Activated T-helper 1 cell treated with anti-CD3 and anti-CD28 coated beads, Interleukin-12 subunit alpha, Interleukin-12 subunit beta, Interleukin-2, Interleukin-4 antibody, amounts not matched to agents 30 ng/mL and 10 ng/mL and 1 ng/mL, durations not matched to agents 14 hours and 24 hours and 36 hours (primary cell): ENCODE measurements at regions of chr3 and their contacts with region 1.

Region 1: DNA sequence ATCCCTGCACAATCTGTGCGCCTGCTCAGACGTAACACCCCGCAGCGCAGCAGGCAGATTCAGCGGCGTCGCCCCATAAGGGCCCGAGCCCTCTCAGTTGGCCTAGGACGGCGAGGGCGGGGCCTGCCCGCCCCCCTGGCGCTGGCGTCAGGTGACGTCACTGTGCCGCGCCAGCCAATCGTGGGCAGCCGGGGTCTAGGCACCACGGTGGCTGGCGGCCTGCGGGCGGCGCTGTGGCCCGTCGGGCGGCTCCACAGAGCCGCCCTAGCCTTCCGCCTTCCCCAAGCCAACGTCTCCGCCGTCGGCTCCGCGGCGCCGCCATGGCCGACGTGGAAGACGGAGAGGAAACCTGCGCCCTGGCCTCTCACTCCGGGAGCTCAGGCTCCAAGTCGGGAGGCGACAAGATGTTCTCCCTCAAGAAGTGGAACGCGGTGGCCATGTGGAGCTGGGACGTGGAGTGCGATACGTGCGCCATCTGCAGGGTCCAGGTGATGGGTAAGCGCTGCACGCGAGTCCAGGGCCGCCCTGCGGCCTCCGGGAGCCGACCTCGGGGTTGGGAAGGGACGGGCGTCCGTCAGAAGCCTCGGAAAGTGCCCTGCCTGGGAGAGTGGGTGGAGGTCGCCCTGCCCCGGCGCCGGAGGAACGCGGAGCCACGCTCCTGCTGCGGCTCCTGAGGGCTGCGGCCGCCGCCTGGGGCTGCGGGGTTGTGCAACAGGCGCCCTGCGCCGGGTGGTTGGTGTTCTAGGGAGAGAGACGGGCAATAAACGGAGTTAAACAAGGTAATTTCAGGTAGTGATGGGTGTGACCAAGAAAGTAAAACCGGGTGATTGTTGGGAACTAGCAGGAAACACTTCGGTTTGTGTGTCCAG is at the start of gene RNF7:
- DNase-seq: peak; percentile 97
- H3K4me3 Mint-ChIP-seq: peak within 1 kb of the TSS; percentile 100
- H3K27ac Mint-ChIP-seq: peak within 1 kb of the TSS; percentile 99
- H3K4me1 Mint-ChIP-seq: peaks cover 30% of the 10 kb centered on the region
- H3K27me3 Mint-ChIP-seq: peaks cover 5% of the 10 kb centered on the region
- total RNA-seq, gene RNF7: 70.5 and 70.9 TPM in 2 replicates

Region 2: DNA sequence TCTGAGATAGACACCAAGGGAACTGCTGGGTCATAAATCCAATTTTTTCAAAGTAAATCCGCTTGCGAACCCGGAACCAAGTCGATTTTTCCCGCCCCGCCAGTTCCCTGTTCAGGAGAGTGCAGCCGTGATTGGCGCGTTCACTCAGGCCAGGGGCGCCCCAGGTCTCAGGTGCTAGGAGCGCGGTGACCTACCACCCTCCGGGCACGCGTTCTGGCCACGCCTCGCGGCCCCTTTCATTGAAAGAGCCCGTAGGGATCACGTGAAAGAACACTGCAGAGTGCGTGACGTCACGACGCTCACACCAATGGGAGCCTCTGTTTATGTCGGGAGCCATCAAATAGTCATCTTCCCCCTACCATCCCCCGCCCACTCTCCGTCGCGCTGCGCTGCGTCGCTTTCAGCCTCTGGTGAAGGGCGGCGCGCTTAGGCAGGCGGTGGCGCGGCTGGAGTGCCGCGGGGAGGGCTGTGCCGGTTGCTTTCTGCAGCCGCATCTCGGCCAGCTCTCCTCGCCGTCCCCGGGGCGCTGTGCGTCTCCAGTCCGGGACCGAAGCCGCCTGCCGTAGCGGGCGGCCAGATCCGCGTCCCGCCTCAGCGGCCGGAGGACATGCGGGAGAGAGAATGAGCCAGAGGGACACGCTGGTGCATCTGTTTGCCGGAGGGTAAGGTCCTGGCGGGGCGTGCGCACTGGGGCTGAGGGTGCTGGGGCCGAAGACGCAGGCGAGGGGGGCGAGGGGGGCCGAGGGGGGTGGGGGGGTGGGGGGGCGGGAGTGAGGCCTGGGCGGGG is 796.6 kb before region 1 on chr3 and contains the start of gene SLC25A36:
- intact Hi-C with region 1: loop called (anchors 2 kb)
- DNase-seq: peak; percentile 95
- H3K4me3 Mint-ChIP-seq: peak within 1 kb of the TSS; percentile 92
- H3K27ac Mint-ChIP-seq: peak within 1 kb of the TSS; percentile 95
- H3K4me1 Mint-ChIP-seq: peaks cover 36% of the 10 kb centered on the region
- H3K27me3 Mint-ChIP-seq: peaks cover 12% of the 10 kb centered on the region
- total RNA-seq, gene SLC25A36: 49.5 and 52.3 TPM in 2 replicates

Region 3: DNA sequence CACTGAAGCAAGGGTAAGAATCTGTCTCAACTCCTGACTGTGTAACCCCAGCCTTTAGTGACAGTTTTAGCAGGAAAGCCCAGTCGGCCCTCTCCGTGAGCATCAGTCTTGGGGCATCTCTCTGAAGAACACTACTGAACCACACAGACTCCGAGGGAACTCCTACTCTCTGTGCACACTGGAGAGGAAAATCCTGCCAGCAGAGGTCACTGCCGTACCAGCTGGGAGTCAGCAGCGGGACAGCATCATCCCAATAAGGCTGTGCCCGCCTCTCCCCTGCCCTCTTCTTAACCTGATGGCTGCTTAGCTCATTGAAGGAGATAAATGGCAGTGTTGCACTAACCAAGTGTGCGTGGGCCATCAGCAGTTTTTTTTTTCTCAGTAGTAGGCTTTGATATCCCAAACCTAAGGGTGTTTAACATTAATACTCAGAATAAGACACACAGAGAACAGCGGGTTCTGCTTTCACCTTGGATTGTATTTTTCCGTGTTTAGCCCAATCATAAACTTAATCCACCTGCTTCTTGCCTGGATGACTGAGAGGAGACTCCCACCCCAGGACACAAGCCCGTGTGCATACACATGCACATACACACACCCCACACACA is 278.1 kb before region 1 on chr3:
- intact Hi-C with region 1: loop called (anchors 1 kb)
- DNase-seq: peak; percentile 78
- H3K4me3 Mint-ChIP-seq: no peak overlapping the region
- H3K27ac Mint-ChIP-seq: no peak overlapping the region
- H3K4me1 Mint-ChIP-seq: peaks cover 26% of the 10 kb centered on the region
- H3K27me3 Mint-ChIP-seq: no peaks in the 10 kb centered on the region

Region 4: GRCh38 chr3:141721589-141721988 is 16.7 kb before region 1 on chr3:
- intact Hi-C with region 1: no loop called
- DNase-seq: no peak
- H3K4me3 Mint-ChIP-seq: no peak overlapping the region
- H3K27ac Mint-ChIP-seq: no peak overlapping the region
- H3K4me1 Mint-ChIP-seq: no peaks in the 10 kb centered on the region
- H3K27me3 Mint-ChIP-seq: peaks cover 11% of the 10 kb centered on the region

Region 5: DNA sequence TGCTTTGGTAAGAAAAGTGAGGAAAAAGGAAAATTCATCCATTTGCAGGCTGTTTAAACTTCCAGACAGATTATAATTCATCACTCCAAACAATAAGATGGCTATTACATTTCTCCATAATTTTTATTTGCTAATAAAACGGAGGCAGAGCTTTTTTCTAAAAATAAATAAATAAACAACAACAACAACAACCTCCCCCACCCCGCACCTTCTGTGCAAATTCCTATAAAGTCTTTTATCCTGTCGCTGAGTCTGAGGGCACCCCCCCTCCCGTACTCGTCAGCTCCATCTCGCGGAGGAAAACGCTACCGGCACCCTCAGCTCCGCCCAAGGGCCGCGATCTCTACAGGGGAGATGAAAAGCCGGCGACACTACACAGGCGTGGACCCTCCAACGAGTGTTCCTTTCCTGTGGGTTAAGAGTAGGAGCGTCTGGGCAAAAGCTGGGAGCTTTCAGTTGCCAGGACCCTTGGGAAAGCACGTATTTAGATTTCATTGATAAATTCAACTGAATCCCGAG is 137.2 kb after region 1 on chr3:
- intact Hi-C with region 1: loop called (anchors 1 kb)
- DNase-seq: peak; percentile 78
- H3K4me3 Mint-ChIP-seq: peak overlapping the region; percentile 92
- H3K27ac Mint-ChIP-seq: peak overlapping the region; percentile 90
- H3K4me1 Mint-ChIP-seq: peaks cover 30% of the 10 kb centered on the region
- H3K27me3 Mint-ChIP-seq: peaks cover 2% of the 10 kb centered on the region

Region 6: DNA sequence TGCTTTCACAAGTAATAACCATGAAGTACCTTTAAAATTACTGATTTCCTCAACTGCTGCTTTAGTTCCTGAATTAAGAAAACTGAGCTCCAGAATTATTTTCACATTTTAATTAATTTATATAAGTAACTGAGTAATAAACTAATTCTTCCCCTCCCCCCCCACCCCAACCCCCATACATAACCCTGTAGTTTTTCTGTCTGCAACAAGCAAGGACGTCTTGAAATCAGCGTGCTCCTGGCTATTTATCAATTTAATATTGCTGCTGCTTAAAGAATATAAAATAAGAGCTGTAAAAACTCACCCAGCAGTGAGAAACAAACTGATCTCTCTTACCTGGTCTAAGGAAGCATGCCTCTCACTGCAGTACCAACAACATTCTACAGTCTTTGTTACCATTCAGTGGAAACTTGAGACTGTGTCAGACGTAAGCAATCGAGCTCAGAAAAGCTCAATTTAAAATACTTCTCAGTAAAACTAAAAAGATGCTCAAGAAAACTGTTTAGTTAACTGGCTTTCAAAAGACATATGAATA is 290.1 kb after region 1 on chr3:
- intact Hi-C with region 1: loop called (anchors 1 kb)
- DNase-seq: peak; percentile 22
- H3K4me3 Mint-ChIP-seq: peak overlapping the region; percentile 87
- H3K27ac Mint-ChIP-seq: peak overlapping the region; percentile 49
- H3K4me1 Mint-ChIP-seq: peaks cover 18% of the 10 kb centered on the region
- H3K27me3 Mint-ChIP-seq: no peaks in the 10 kb centered on the region

Region 7: GRCh38 chr3:142279965-142280590 is 541.8 kb after region 1 on chr3:
- intact Hi-C with region 1: loop called (anchors 5 kb)
- DNase-seq: peak; percentile 36
- H3K4me3 Mint-ChIP-seq: no peak overlapping the region
- H3K27ac Mint-ChIP-seq: no peak overlapping the region
- H3K4me1 Mint-ChIP-seq: peaks cover 24% of the 10 kb centered on the region
- H3K27me3 Mint-ChIP-seq: no peaks in the 10 kb centered on the region

Region 8: GRCh38 chr3:142723968-142724681 is 985.9 kb after region 1 on chr3 and contains the start of gene TRPC1:
- intact Hi-C with region 1: loop called (anchors 10 kb)
- DNase-seq: peak; percentile 73
- H3K4me3 Mint-ChIP-seq: peak within 1 kb of the TSS; percentile 86
- H3K27ac Mint-ChIP-seq: peak within 1 kb of the TSS; percentile 83
- H3K4me1 Mint-ChIP-seq: peaks cover 4% of the 10 kb centered on the region
- H3K27me3 Mint-ChIP-seq: peaks cover 50% of the 10 kb centered on the region
- total RNA-seq, gene TRPC1: 0.66 and 1.1 TPM in 2 replicates